Lower leg skin (tissue), 4 donors: ENCODE measurements at regions of chr14 and their contacts with region 1.

Region 1: GRCh38 chr14:36134038-36134437 is 42.5 kb downstream of the PTCSC3 start:
- DNase-seq: no peak
- H3K4me3 ChIP-seq: no peak overlapping the region
- CTCF ChIP-seq: no peak
- POLR2A ChIP-seq: no peak

Region 2: DNA sequence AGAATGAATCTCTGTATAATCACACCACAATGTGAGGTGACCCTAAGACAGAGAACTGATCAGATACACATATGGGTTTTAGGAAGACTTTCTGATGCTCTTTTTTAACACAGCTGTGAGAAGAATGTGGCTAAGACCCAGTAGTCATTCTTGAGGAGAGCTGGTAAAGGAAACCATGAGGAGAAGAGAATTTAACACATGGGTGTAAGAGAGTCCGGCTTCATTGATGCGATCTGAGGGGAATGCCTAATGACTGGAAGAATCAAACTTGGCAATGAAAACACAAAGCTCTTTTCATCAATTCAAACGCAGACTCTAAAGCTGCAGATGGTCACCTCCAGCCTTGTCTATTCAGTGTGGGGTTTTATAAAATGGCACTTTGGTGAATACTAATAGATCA is 1381.7 kb after region 1 on chr14:
- intact Hi-C with region 1: loop called (anchors 10 kb)
- DNase-seq: no peak
- H3K4me3 ChIP-seq: no peak overlapping the region
- CTCF ChIP-seq: no peak
- POLR2A ChIP-seq: no peak